SK-N-SH (cell line): ENCODE measurements at regions of chr2 and their contacts with region 1.

Region 1: DNA sequence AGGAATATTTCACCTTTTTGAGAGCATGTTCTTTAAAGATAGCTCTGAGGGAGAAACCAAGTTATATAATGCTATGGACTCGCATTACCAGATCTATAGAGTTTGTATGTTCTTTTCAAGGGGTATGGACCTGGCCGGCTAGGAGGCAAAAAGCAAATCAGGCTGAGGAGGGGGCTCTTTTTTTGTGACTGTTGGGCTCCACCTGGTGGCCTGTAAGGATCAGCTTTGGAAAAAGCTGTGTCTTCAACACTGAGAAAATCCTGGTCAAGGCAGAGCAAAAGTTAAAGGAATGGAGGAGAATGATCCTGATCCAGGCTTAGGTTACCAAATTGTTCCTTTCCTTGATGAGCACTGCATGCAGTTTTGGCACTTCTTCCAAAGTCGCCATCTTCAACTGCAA is 180.5 kb downstream of the DIS3L2 start:
- DNase-seq: peak; percentile 48
- H3K4me3 ChIP-seq: no peak overlapping the region; a peak in 1 of 4 replicates
- H3K27ac ChIP-seq: no peak overlapping the region
- H3K4me1 ChIP-seq: peaks cover 0 to 13% of the 10 kb centered on the region in 2 experiments; a peak in 1 of 4 replicates
- H3K27me3 ChIP-seq: no peaks in the 10 kb centered on the region
- CTCF ChIP-seq: peak; percentile 79
- EP300 ChIP-seq: no peak
- RAD21 ChIP-seq: peak; percentile 80

Region 2: DNA sequence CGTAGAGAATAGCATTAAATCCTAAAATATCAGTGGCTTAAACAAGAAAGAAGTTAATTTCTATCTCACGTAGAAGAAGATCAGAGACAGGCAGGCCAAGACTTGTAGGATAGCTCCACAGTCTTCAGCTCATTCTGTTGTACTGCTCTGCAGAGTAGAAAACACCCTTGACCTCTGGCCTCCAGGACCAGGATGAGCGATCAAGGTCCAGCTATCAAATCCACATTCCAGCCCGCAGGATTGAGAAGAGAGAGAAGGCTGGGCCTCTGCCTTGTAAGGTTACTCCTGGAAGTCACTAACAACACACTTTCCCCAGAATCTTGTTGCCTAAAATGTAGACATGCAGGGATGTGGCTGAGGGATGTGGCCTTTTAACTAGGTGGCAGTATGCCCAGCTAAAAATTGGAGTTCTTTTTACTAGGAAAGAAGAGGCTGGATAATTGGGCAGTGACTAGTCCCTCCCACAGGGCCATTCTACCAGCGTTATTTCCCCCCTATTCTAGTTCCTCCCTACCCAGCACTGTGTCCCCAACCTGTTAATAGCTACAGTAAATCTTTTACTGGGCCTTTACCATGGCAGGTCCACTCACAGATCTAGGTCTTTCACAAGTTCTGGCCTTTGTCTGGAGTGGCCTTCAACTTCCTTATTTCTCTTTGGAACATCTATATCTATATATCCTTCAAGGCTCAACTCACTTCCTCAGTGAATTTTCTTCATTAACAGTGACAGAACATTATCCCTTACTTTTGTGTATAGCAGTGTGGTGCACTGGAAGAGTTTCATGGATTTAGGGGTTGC is 15.5 kb before region 1 on chr2:
- CTCF ChIA-PET with region 1: interaction called, 10 read pairs
- POLR2A ChIA-PET with region 1: no interaction called
- DNase-seq: no peak
- H3K4me3 ChIP-seq: no peak overlapping the region
- H3K27ac ChIP-seq: no peak overlapping the region
- H3K4me1 ChIP-seq: no peaks in the 10 kb centered on the region
- H3K27me3 ChIP-seq: no peaks in the 10 kb centered on the region
- CTCF ChIP-seq: no peak
- EP300 ChIP-seq: no peak
- RAD21 ChIP-seq: no peak

Region 3: GRCh38 chr2:232260075-232260474 is 118.0 kb after region 1 on chr2:
- CTCF ChIA-PET with region 1: no interaction called
- POLR2A ChIA-PET with region 1: no interaction called
- DNase-seq: no peak
- H3K4me3 ChIP-seq: no peak overlapping the region
- H3K27ac ChIP-seq: no peak overlapping the region
- H3K4me1 ChIP-seq: peaks cover 0 to 5% of the 10 kb centered on the region in 2 experiments; a peak in 2 of 4 replicates
- H3K27me3 ChIP-seq: no peaks in the 10 kb centered on the region
- CTCF ChIP-seq: no peak
- EP300 ChIP-seq: peak in 1 of 2 experiments; percentile 33; a peak in 1 of 4 replicates
- RAD21 ChIP-seq: no peak